ENCODE measurements at regions of chr15 and their contacts with region 1.

Region 1: DNA sequence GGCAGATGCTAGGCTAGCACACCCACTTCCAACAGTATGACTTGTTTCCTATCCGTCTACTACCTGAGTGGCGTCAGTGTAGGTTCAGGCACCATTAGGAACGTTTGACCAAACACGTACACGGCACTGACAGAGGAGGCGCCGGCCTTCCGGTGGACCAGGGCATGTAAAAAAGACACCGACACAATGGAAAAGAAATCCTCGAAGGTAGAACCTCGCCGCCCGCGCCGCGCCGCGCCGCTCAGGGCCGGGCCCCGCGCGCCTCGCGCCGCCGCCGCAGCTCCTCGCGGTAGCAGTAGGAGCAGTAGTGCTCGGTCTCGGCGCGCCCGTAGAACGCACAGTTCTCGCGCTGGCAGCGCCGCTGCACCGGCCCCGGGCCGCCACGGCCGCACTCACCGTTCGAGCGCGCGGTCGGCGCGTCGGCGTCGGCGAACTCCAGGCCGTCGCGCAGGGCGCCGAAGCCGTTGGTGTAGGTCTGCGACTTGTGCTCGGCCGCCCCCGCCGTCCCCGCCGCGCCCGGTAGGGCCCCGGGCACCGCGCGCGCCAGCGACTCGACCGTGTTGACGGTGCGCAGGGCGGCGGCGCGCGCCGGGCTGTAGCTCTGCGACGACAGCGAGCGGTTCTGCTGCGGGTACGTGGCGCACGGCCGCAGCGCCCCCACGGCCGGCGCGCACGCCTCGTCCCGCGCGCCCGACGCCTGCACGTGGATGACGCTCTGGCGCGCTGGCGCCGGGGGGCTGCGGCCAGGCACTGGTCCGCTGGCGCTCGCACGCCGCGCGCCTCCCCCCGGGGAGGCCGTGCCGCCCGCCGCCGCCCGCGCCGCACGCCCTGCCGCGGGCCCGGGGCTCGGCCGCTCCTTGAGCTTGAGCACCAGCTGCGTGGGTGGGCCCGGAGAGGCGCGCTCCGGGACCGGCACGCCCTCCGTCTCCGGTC is 156.7 kb downstream of the KLF13 start:
- DNase-seq: peak; percentile 23 to 70 (median 55)
- H3K4me3 ChIP-seq: peak overlapping the region; percentile 49
- H3K4me3 Mint-ChIP-seq: peak overlapping the region; percentile 91 to 98 (median 97)
- H3K27ac ChIP-seq: peak overlapping the region; percentile 24
- H3K27ac Mint-ChIP-seq: peak overlapping the region; percentile 70 to 96 (median 94)
- H3K4me1 ChIP-seq: peaks cover 36% of the 10 kb centered on the region
- H3K4me1 Mint-ChIP-seq: peaks cover 52 to 87% (median 69%) of the 10 kb centered on the region in 3 donors
- H3K27me3 ChIP-seq: no peaks in the 10 kb centered on the region
- H3K27me3 Mint-ChIP-seq: peaks cover 0 to 2% of the 10 kb centered on the region in 2 donors

Region 2: DNA sequence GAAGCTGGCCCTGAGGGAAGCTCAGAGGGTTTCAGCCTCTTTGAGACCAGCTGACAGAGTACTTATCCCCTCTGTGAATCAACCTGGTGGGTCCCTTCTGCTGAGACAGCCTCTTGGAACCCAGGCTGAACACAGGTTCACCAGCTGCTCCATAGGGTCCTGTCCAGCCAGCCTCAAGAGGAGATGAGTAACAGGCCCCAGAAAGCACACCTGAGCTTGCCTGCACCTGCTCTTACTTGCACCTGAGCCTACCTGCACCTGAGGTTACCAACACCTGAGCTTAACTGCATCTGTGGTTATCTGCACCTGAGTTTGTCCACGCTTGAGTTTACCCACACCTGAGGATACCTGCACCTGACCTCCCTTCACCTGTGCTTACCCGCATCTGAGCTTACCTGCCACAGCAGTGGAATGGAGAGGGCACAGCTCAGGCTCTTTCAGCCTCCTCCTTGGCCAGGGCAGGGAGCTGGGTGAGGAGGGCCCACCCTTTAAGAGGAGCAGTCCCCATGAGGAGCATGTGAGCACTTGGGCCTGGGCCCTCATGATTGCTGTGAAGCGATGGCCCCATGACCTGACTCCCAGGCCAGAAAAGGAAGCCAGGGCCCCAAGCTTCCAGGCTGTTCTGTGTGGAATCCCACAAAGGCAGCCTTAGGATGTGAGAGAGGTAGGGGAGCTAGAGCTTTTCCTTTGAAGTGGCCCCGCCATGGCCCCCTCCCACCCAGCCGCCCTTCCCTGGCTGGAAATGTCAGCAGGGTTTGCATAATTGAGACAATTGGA is 381.9 kb before region 1 on chr15 and contains the start of gene TRPM1:
- CTCF ChIA-PET with region 1: no interaction called
- POLR2A ChIA-PET with region 1: no interaction called
- DNase-seq: no peak
- H3K4me3 ChIP-seq: no peak within 1 kb of the TSS
- H3K4me3 Mint-ChIP-seq: no peak within 1 kb of the TSS
- H3K27ac ChIP-seq: no peak within 1 kb of the TSS
- H3K27ac Mint-ChIP-seq: no peak within 1 kb of the TSS
- H3K4me1 ChIP-seq: no peaks in the 10 kb centered on the region
- H3K4me1 Mint-ChIP-seq: no peaks in the 10 kb centered on the region
- H3K27me3 ChIP-seq: no peaks in the 10 kb centered on the region
- H3K27me3 Mint-ChIP-seq: peaks cover 3 to 4% of the 10 kb centered on the region in 2 donors
- total RNA-seq, gene TRPM1: not detected

Region 3: DNA sequence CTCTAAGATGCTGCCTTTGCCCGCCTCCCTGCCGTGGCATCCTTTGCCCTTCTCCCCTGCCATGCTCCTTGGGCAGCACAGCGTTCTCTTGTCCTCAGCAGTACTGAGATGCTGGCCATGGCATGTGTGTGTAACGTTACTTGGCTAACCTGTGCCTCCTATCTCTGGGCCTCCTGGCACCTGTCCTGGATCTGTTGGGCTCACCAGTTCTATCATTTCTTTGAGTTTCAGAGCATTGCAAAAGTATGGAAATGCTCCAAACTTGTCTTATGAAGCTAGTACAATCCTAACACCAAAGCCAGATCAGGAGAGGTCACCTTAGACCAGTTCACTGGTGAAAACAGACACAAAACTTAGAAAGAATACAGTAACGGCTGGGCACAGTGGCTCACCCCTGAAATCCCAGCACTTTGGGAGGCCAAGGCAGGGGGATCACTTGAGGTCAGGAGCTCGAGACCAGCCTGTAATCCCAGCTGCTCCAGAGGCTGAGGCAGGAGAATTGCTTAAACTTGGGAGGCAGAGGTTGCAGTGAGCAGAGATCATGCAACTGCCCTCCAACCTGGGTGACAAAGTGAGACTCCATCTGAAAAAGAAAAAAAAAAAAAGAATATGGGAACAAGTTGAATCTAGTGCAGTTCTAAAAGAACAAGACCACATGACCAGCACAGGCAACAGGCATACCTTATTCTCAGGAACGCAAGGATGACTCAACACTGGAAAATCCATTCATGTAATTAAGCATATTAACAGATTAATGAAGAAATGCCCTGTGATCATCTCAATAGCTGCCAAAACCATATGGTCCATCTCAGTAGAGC is 319.4 kb before region 1 on chr15:
- CTCF ChIA-PET with region 1: no interaction called
- POLR2A ChIA-PET with region 1: no interaction called
- DNase-seq: no peak
- H3K4me3 ChIP-seq: no peak overlapping the region
- H3K4me3 Mint-ChIP-seq: no peak overlapping the region
- H3K27ac ChIP-seq: no peak overlapping the region
- H3K27ac Mint-ChIP-seq: peak overlapping the region in 1 of 8 donors; percentile 67
- H3K4me1 ChIP-seq: peaks cover 4% of the 10 kb centered on the region
- H3K4me1 Mint-ChIP-seq: peaks cover 17 to 22% (median 20%) of the 10 kb centered on the region in 3 donors
- H3K27me3 ChIP-seq: no peaks in the 10 kb centered on the region
- H3K27me3 Mint-ChIP-seq: peaks cover 4 to 10% of the 10 kb centered on the region in 2 donors

Region 4: DNA sequence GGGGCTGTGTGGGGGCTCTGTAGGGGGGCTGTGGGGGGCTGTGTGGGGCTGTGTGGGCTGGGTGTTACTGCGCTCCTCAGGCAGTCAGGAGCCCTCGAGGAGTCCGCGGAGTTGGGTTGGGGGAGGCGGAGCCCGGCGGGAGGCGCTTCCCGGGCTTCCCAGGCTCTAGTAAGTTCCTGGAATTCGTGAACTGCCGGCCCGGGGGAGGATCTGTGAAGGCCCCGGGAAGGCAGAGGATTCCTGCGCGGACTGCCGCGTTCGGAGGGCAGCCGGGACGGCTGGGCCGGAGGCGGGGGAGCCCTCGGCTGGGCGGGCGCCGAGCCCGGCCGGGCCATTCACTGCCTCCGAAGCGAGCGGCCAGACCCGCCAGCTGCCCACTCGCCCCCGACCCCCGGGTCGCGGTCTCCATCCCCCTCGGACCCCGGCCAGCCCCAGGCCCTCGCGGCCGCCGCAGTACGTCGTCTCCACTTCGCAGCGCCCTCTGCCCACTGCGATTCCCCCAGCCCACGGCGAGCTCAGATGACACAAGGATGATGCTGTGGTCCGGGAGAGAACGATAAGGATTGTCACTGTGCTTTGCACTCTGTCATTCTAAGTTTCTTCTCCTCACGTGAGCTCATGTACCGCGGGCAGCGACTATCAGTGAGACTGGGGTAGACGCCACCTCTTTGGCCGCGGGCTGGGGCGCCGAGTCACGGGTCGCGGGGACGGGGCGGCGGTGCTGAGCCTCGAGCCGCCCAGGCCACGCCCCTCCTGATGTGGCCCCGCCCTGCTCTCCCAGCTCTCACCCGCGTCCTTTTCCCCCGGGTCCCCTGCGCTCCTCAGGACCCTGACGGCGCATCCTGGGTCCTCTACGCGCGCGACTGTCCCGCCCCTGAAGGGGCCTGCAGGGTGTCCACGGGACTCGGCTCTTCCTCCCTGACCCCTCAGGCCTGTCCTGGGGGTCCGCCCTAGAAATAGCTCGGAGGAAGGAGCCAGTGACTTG is 91.3 kb before region 1 on chr15:
- CTCF ChIA-PET with region 1: interaction called, 18 read pairs
- POLR2A ChIA-PET with region 1: interaction called, 15 read pairs
- DNase-seq: peak; percentile 78 to 91 (median 82)
- H3K4me3 ChIP-seq: peak overlapping the region; percentile 87
- H3K4me3 Mint-ChIP-seq: peak overlapping the region; percentile 87 to 98 (median 95)
- H3K27ac ChIP-seq: peak overlapping the region; percentile 73
- H3K27ac Mint-ChIP-seq: peak overlapping the region; percentile 82 to 99 (median 98)
- H3K4me1 ChIP-seq: peaks cover 33% of the 10 kb centered on the region
- H3K4me1 Mint-ChIP-seq: peaks cover 49 to 69% (median 57%) of the 10 kb centered on the region in 3 donors
- H3K27me3 ChIP-seq: no peaks in the 10 kb centered on the region
- H3K27me3 Mint-ChIP-seq: peaks cover 0 to 1% of the 10 kb centered on the region in 2 donors

Region 5: GRCh38 chr15:31472636-31473384 is 10.5 kb before region 1 on chr15:
- CTCF ChIA-PET with region 1: interaction called, 52 read pairs
- POLR2A ChIA-PET with region 1: interaction called, 31 read pairs
- DNase-seq: peak; percentile 16 to 74 (median 63)
- H3K4me3 ChIP-seq: peak overlapping the region; percentile 37
- H3K4me3 Mint-ChIP-seq: peak overlapping the region; percentile 21 to 91 (median 80)
- H3K27ac ChIP-seq: peak overlapping the region; percentile 3
- H3K27ac Mint-ChIP-seq: peak overlapping the region; percentile 78 to 97 (median 94)
- H3K4me1 ChIP-seq: peaks cover 48% of the 10 kb centered on the region
- H3K4me1 Mint-ChIP-seq: peaks cover 51 to 82% (median 52%) of the 10 kb centered on the region in 3 donors
- H3K27me3 ChIP-seq: no peaks in the 10 kb centered on the region
- H3K27me3 Mint-ChIP-seq: no peaks in the 10 kb centered on the region

Measured in CD8-positive, alpha-beta memory T cell (primary cell).